ENCODE measurements at regions of chr6 and their contacts with region 1.

Region 1: DNA sequence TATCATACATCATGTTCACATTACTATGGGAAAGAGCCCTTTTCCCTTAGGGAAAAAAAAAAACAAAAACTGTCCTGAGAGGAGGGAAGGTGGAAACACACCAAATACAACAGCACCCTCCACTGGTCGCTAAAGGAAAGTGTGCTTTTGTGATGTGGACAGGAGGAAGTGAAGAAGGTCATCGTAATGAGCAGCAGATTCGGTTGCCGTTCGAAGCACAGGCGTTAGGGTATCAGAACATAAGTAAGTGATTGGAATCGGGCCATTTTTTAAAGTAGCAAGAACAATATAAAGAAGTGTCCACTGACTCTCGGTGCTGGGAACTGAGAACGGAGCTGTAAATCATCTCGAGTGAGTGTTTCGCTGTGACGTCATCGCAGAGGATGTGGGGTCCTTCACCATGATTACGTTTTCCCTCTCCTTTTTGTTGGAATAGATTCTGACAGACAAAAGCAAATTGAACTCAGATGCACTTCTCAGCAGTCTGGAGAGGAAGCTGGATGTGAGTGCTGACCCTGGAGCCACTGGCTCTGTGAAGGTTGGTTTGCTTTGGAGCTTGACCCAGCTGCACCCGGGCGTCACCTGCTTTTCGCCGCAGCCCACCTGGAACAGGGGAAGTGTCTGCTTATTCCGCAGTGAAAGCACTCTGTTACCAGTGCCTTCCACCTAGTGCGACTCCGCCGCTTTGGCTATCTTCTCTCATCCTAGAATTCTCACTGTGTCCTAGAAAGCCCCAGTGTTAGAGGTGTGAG is 203.6 kb upstream of the GMDS start:
- DNase-seq: peak; percentile 43 to 68 (median 52)
- H3K4me3 ChIP-seq: peak overlapping the region in 1 of 3 experiments; percentile 46
- H3K4me3 Mint-ChIP-seq: peak overlapping the region; percentile 9 to 78
- H3K27ac ChIP-seq: no peak overlapping the region
- H3K27ac Mint-ChIP-seq: no peak overlapping the region
- H3K4me1 ChIP-seq: peaks cover 4 to 5% of the 10 kb centered on the region in 2 donors
- H3K4me1 Mint-ChIP-seq: peaks cover 5% of the 10 kb centered on the region
- H3K27me3 ChIP-seq: peaks cover 0 to 3% of the 10 kb centered on the region in 2 donors
- H3K27me3 Mint-ChIP-seq: peaks cover under 1 to 4% (median 3%) of the 10 kb centered on the region in 3 donors
- CTCF ChIP-seq: peak; percentile 83

Region 2: DNA sequence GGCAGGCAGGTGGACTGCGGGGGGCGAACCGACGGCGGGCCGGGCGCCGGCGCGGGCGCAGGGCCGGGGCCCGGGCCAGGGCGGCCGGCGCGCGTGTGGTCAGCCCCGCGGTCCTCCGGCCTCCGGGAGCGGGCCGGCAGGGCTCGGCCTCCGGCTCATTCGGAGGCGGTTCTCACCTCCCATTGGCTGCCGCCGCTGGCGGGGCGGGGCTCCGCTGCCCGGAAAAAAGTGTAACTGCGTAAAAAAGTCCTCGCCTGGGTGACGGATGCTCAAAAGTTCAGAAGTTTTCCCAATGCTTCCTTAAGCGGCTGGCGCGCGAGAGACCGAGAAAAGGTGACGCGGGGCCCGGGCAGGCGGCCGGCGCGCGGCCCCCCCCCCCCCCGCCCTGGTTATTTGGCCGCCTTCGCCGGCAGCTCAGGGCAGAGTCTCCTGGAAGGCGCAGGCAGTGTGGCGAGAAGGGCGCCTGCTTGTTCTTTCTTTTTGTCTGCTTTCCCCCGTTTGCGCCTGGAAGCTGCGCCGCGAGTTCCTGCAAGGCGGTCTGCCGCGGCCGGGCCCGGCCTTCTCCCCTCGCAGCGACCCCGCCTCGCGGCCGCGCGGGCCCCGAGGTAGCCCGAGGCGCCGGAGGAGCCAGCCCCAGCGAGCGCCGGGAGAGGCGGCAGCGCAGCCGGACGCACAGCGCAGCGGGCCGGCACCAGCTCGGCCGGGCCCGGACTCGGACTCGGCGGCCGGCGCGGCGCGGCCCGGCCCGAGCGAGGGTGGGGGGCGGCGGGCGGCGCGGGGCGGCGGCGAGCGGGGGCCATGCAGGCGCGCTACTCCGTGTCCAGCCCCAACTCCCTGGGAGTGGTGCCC is 839.1 kb before region 1 on chr6 and contains the start of gene FOXC1:
- intact Hi-C with region 1: loop called in 1 of 2 experiments (anchors 5 kb)
- DNase-seq: peak; percentile 55 to 73 (median 64)
- H3K4me3 ChIP-seq: peak within 1 kb of the TSS; percentile 16 to 68 (median 20)
- H3K4me3 Mint-ChIP-seq: peak within 1 kb of the TSS; percentile 80 to 90
- H3K27ac ChIP-seq: no peak within 1 kb of the TSS
- H3K27ac Mint-ChIP-seq: no peak within 1 kb of the TSS
- H3K4me1 ChIP-seq: peaks cover 54 to 72% of the 10 kb centered on the region in 2 donors
- H3K4me1 Mint-ChIP-seq: peaks cover 52% of the 10 kb centered on the region
- H3K27me3 ChIP-seq: peaks cover 72 to 79% of the 10 kb centered on the region in 2 donors
- H3K27me3 Mint-ChIP-seq: peaks cover 72 to 95% (median 73%) of the 10 kb centered on the region in 3 donors
- CTCF ChIP-seq: no peak
- polyA plus RNA-seq, gene FOXC1: 0.36 TPM in 1 of 3 donors, not detected in the others